Dendritic cell treated with granulocyte-macrophage colony-stimulating factor and Interleukin-4, amounts not matched to agents 40 ng/mL and 50 ng/mL, for 4 days (primary cell): ENCODE measurements at regions of chr16 and their contacts with region 1.

Region 1: DNA sequence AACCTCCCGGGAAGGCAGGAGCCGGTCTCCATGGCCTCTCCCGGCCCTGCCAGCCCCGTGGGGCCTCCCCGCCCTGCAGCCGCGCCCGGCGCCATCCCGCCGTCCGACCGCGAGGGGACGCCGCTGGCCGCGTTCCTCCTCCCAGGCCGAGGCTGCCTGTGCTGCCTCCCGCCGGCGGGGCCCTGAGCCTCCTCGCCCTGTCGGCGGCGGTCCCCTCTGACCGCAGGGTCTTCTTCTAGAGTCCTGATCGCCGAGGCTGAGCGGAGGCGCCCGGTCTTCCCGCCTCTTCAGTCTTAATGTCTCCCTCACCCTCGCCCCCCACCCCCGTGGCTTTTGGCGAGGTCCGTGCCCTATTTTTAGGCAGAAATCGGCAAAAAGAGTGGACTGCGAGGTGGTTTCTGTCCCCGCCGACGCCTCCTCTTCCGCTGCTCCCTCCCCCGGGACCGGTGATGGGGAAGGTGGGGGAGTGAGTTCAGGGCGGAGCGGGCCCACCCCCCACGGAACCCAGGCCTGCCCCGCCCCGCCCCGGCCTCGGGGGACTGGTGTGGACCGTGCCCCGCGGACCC is 794 bp upstream of the CPNE7 start:
- H3K4me3 Mint-ChIP-seq: peak overlapping the region; percentile 53
- H3K27ac Mint-ChIP-seq: no peak overlapping the region
- H3K4me1 Mint-ChIP-seq: peaks cover 10% of the 10 kb centered on the region
- H3K27me3 Mint-ChIP-seq: peaks cover 70% of the 10 kb centered on the region

Region 2: GRCh38 chr16:89511374-89511773 is 63.4 kb before region 1 on chr16:
- intact Hi-C with region 1: no loop called
- H3K4me3 Mint-ChIP-seq: no peak overlapping the region
- H3K27ac Mint-ChIP-seq: no peak overlapping the region
- H3K4me1 Mint-ChIP-seq: peaks cover 26% of the 10 kb centered on the region
- H3K27me3 Mint-ChIP-seq: no peaks in the 10 kb centered on the region

Region 3: GRCh38 chr16:89615596-89616090 is 40.9 kb after region 1 on chr16:
- intact Hi-C with region 1: loop called (anchors 2 kb)
- H3K4me3 Mint-ChIP-seq: no peak overlapping the region
- H3K27ac Mint-ChIP-seq: no peak overlapping the region
- H3K4me1 Mint-ChIP-seq: peaks cover 7% of the 10 kb centered on the region
- H3K27me3 Mint-ChIP-seq: peaks cover 18% of the 10 kb centered on the region

Region 4: DNA sequence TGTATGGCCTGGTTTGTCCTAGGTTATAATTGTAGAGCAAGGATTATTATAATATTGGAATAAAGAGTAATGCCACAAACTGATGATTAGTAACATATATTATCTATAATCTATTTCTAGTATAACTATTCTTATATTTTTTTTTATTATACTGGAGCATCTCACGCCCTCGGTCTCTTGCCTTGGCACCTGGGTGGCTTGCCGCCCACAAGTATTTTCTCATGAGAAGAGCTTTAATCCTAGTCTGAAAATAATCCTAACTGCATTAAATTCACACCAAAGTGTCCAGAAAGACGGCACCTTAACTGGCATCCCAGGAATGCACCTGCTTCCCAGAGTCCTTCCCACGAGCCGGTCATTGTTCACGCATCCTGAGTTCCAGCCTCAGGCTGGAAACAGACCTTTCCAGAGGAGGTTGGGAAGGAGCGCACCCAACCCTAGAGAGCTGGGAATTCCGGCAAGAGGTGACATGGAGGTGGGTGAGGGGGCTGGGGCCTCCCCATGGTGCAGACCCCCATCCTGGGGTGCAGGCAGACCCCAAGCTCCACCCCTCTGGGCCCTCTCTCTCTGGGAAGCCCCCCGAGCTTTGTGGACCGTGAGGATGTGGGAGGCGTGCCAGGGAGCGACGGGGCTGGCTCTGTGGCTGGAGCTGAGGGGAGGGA is 66.8 kb after region 1 on chr16:
- intact Hi-C with region 1: loop called (anchors 1 kb)
- H3K4me3 Mint-ChIP-seq: no peak overlapping the region
- H3K27ac Mint-ChIP-seq: no peak overlapping the region
- H3K4me1 Mint-ChIP-seq: peaks cover 9% of the 10 kb centered on the region
- H3K27me3 Mint-ChIP-seq: peaks cover 16% of the 10 kb centered on the region